T-cell (primary cell): ENCODE measurements at regions of chr3 and their contacts with region 1.

Region 1: GRCh38 chr3:140292684-140293083 is 357.7 kb downstream of the CLSTN2 start:
- DNase-seq: no peak
- ATAC-seq: no peak
- H3K4me3 ChIP-seq: no peak overlapping the region
- H3K4me3 Mint-ChIP-seq: no peak overlapping the region
- H3K27ac ChIP-seq: no peak overlapping the region
- H3K27ac Mint-ChIP-seq: no peak overlapping the region
- H3K4me1 ChIP-seq: no peaks in the 10 kb centered on the region
- H3K4me1 Mint-ChIP-seq: no peaks in the 10 kb centered on the region
- H3K27me3 ChIP-seq: no peaks in the 10 kb centered on the region
- H3K27me3 Mint-ChIP-seq: peaks cover 0 to 4% of the 10 kb centered on the region in 2 donors

Region 2: GRCh38 chr3:140308535-140308934 is 15.9 kb after region 1 on chr3:
- CTCF ChIA-PET with region 1: no interaction called
- POLR2A ChIA-PET with region 1: interaction called in 1 of 2 experiments, 10 read pairs
- DNase-seq: no peak
- ATAC-seq: no peak
- H3K4me3 ChIP-seq: no peak overlapping the region
- H3K4me3 Mint-ChIP-seq: no peak overlapping the region
- H3K27ac ChIP-seq: no peak overlapping the region
- H3K27ac Mint-ChIP-seq: no peak overlapping the region
- H3K4me1 ChIP-seq: no peaks in the 10 kb centered on the region
- H3K4me1 Mint-ChIP-seq: no peaks in the 10 kb centered on the region
- H3K27me3 ChIP-seq: no peaks in the 10 kb centered on the region
- H3K27me3 Mint-ChIP-seq: peaks cover 4 to 12% of the 10 kb centered on the region in 2 donors

Region 3: GRCh38 chr3:140521751-140522445 is 229.2 kb after region 1 on chr3:
- CTCF ChIA-PET with region 1: no interaction called
- POLR2A ChIA-PET with region 1: no interaction called
- DNase-seq: no peak
- ATAC-seq: no peak
- H3K4me3 ChIP-seq: no peak overlapping the region
- H3K4me3 Mint-ChIP-seq: no peak overlapping the region
- H3K27ac ChIP-seq: no peak overlapping the region
- H3K27ac Mint-ChIP-seq: no peak overlapping the region
- H3K4me1 ChIP-seq: no peaks in the 10 kb centered on the region
- H3K4me1 Mint-ChIP-seq: no peaks in the 10 kb centered on the region
- H3K27me3 ChIP-seq: peaks cover 0 to 22% of the 10 kb centered on the region in 2 experiments
- H3K27me3 Mint-ChIP-seq: peaks cover 14 to 40% of the 10 kb centered on the region in 2 donors